ENCODE measurements at regions of chr6 and their contacts with region 1.

Region 1: DNA sequence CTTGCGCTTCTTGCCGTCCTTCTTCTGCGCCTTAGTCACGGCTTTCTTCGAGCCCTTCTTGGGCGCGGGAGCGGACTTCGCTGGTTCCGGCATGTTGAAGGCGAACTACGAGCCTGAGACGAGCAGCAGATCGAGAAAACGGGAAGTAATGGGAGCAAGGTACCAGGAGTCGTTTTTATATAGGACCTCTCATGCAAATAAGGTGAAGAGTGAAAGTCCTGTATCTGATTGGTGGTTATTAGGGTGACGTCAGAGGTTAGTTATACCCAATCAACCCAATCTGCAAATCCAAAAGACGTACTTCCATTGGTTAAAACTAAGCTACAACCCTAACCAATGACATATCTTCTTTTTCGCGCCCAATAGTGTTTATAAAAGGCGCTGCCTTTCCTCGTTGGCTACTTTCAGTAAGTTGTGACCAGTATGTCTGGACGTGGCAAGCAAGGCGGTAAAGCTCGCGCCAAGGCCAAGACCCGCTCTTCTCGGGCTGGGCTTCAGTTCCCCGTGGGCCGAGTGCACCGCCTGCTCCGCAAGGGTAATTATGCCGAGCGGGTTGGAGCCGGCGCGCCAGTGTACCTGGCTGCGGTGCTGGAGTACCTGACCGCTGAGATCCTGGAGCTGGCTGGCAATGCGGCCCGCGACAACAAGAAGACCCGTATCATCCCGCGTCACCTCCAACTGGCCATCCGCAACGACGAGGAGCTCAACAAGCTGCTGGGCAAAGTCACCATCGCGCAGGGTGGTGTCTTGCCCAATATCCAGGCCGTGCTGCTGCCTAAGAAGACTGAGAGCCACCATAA is 100.6 kb upstream of the PRSS16 start:
- DNase-seq: peak; percentile 98
- ATAC-seq: peak; percentile 85
- H3K4me3 ChIP-seq: peak overlapping the region; percentile 72 to 100 (median 88)
- H3K4me3 Mint-ChIP-seq: no peak overlapping the region
- H3K27ac ChIP-seq: peak overlapping the region; percentile 76 to 92
- H3K27ac Mint-ChIP-seq: no peak overlapping the region
- H3K4me1 ChIP-seq: peaks cover 20 to 26% of the 10 kb centered on the region in 2 donors
- H3K4me1 Mint-ChIP-seq: peaks cover 17% of the 10 kb centered on the region
- H3K27me3 ChIP-seq: no peaks in the 10 kb centered on the region
- H3K27me3 Mint-ChIP-seq: no peaks in the 10 kb centered on the region
- CTCF ChIP-seq: no peak

Region 2: GRCh38 chr6:26122793-26123674 is 1023.9 kb before region 1 on chr6:
- CTCF ChIA-PET with region 1: interaction called, 5 read pairs
- POLR2A ChIA-PET with region 1: interaction called, 24 read pairs
- intact Hi-C with region 1: loop called (anchors 2 kb)
- DNase-seq: peak; percentile 97
- ATAC-seq: peak; percentile 59
- H3K4me3 ChIP-seq: peak overlapping the region; percentile 87 to 100 (median 96)
- H3K4me3 Mint-ChIP-seq: peak overlapping the region; percentile 93
- H3K27ac ChIP-seq: peak overlapping the region; percentile 87 to 88
- H3K27ac Mint-ChIP-seq: peak overlapping the region; percentile 97
- H3K4me1 ChIP-seq: peaks cover 19 to 23% of the 10 kb centered on the region in 2 donors
- H3K4me1 Mint-ChIP-seq: peaks cover 26% of the 10 kb centered on the region
- H3K27me3 ChIP-seq: no peaks in the 10 kb centered on the region
- H3K27me3 Mint-ChIP-seq: no peaks in the 10 kb centered on the region
- CTCF ChIP-seq: no peak

Region 3: GRCh38 chr6:26249957-26250697 is 896.8 kb before region 1 on chr6:
- CTCF ChIA-PET with region 1: interaction called, 4 read pairs
- POLR2A ChIA-PET with region 1: interaction called, 10 read pairs
- intact Hi-C with region 1: no loop called
- DNase-seq: peak; percentile 88
- ATAC-seq: peak; percentile 67
- H3K4me3 ChIP-seq: peak overlapping the region; percentile 68 to 90 (median 83)
- H3K4me3 Mint-ChIP-seq: peak overlapping the region; percentile 97
- H3K27ac ChIP-seq: peak overlapping the region; percentile 73 to 74
- H3K27ac Mint-ChIP-seq: peak overlapping the region; percentile 97
- H3K4me1 ChIP-seq: peaks cover 8 to 16% of the 10 kb centered on the region in 2 donors
- H3K4me1 Mint-ChIP-seq: peaks cover 43% of the 10 kb centered on the region
- H3K27me3 ChIP-seq: no peaks in the 10 kb centered on the region
- H3K27me3 Mint-ChIP-seq: no peaks in the 10 kb centered on the region
- CTCF ChIP-seq: peak; percentile 70

Region 4: GRCh38 chr6:27157459-27158315 is 10.8 kb after region 1 on chr6:
- CTCF ChIA-PET with region 1: interaction called, 18 read pairs
- POLR2A ChIA-PET with region 1: interaction called, 16 read pairs
- intact Hi-C with region 1: loop called (anchors 1 kb)
- DNase-seq: peak; percentile 91
- ATAC-seq: peak; percentile 77
- H3K4me3 ChIP-seq: peak overlapping the region; percentile 59 to 91 (median 72)
- H3K4me3 Mint-ChIP-seq: peak overlapping the region; percentile 94
- H3K27ac ChIP-seq: peak overlapping the region; percentile 18 to 45
- H3K27ac Mint-ChIP-seq: peak overlapping the region; percentile 85
- H3K4me1 ChIP-seq: peaks cover 17 to 20% of the 10 kb centered on the region in 2 donors
- H3K4me1 Mint-ChIP-seq: peaks cover 25% of the 10 kb centered on the region
- H3K27me3 ChIP-seq: no peaks in the 10 kb centered on the region
- H3K27me3 Mint-ChIP-seq: no peaks in the 10 kb centered on the region
- CTCF ChIP-seq: peak; percentile 64

Region 5: GRCh38 chr6:27452496-27452897 is 305.6 kb after region 1 on chr6:
- CTCF ChIA-PET with region 1: no interaction called
- POLR2A ChIA-PET with region 1: no interaction called
- intact Hi-C with region 1: no loop called
- DNase-seq: no peak
- ATAC-seq: no peak
- H3K4me3 ChIP-seq: no peak overlapping the region
- H3K4me3 Mint-ChIP-seq: no peak overlapping the region
- H3K27ac ChIP-seq: no peak overlapping the region
- H3K27ac Mint-ChIP-seq: no peak overlapping the region
- H3K4me1 ChIP-seq: no peaks in the 10 kb centered on the region
- H3K4me1 Mint-ChIP-seq: no peaks in the 10 kb centered on the region
- H3K27me3 ChIP-seq: no peaks in the 10 kb centered on the region
- H3K27me3 Mint-ChIP-seq: no peaks in the 10 kb centered on the region
- CTCF ChIP-seq: no peak

Region 6: DNA sequence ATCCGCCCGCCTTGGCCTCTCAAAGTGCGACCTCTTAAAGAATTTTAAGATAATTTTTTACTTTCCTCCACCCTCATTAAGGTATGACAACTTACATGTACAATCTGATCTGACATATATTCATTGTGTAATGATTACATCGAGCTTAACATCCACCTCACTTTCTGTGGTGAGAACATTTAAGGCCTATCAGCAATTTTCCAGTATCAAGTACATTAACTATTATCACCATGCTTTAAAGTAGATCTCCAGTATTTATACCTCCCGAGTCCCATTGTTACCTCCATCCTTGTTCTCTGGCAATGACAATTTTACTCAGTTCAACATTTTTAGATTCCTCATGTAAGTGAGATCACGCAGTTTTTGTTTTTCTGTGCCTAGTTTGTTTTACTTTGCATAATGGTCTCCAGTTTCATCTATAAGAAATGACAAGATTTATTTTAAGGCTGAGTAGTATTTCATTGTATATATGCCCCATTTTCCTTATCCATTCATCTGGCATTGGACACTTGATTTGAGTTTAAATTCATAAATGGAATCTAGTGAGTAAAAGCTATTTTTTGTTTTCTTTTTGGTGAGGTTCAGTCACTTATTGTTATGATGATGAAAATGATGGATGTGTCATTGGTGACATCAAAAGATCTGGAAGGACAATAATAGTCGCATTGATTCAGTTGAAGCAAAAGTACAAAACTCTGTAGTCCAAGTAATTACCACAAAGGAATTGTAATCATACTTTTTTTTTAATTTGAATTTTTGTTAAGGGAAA is 678.3 kb after region 1 on chr6:
- CTCF ChIA-PET with region 1: no interaction called
- POLR2A ChIA-PET with region 1: interaction called, 17 read pairs
- intact Hi-C with region 1: no loop called
- DNase-seq: peak; percentile 41
- ATAC-seq: no peak
- H3K4me3 ChIP-seq: peak overlapping the region; percentile 66 to 95 (median 88)
- H3K4me3 Mint-ChIP-seq: peak overlapping the region; percentile 95
- H3K27ac ChIP-seq: peak overlapping the region; percentile 79 to 90
- H3K27ac Mint-ChIP-seq: peak overlapping the region; percentile 97
- H3K4me1 ChIP-seq: peaks cover 16 to 20% of the 10 kb centered on the region in 2 donors
- H3K4me1 Mint-ChIP-seq: peaks cover 35% of the 10 kb centered on the region
- H3K27me3 ChIP-seq: no peaks in the 10 kb centered on the region
- H3K27me3 Mint-ChIP-seq: no peaks in the 10 kb centered on the region
- CTCF ChIP-seq: no peak

Region 7: GRCh38 chr6:27864906-27865849 is 718.3 kb after region 1 on chr6:
- CTCF ChIA-PET with region 1: no interaction called
- POLR2A ChIA-PET with region 1: interaction called, 29 read pairs
- intact Hi-C with region 1: loop called (anchors 1 kb)
- DNase-seq: peak; percentile 97
- ATAC-seq: peak; percentile 80
- H3K4me3 ChIP-seq: peak overlapping the region; percentile 60 to 82 (median 69)
- H3K4me3 Mint-ChIP-seq: peak overlapping the region; percentile 97
- H3K27ac ChIP-seq: peak overlapping the region; percentile 81 to 83
- H3K27ac Mint-ChIP-seq: peak overlapping the region; percentile 97
- H3K4me1 ChIP-seq: peaks cover 13 to 35% of the 10 kb centered on the region in 2 donors
- H3K4me1 Mint-ChIP-seq: peaks cover 45% of the 10 kb centered on the region
- H3K27me3 ChIP-seq: no peaks in the 10 kb centered on the region
- H3K27me3 Mint-ChIP-seq: no peaks in the 10 kb centered on the region
- CTCF ChIP-seq: no peak